Sigmoid colon (tissue), 7 donors: ENCODE measurements at regions of chr19 and their contacts with region 1.

Region 1: GRCh38 chr19:15125232-15126067 is 18.2 kb downstream of the SYDE1 start:
- DNase-seq: peak; percentile 100
- H3K4me3 ChIP-seq: peak overlapping the region; percentile 74 to 89 (median 78)
- H3K27ac ChIP-seq: peak overlapping the region; percentile 92 to 98 (median 96)
- H3K4me1 ChIP-seq: peaks cover 0 to 31% (median 27%) of the 10 kb centered on the region in 4 donors
- H3K27me3 ChIP-seq: no peaks in the 10 kb centered on the region
- CTCF ChIP-seq: peak in 1 of 4 experiments; percentile 18
- EP300 ChIP-seq: peak in 1 of 4 donors; percentile 72
- POLR2A ChIP-seq: peak in 1 of 2 donors; percentile 46

Region 2: DNA sequence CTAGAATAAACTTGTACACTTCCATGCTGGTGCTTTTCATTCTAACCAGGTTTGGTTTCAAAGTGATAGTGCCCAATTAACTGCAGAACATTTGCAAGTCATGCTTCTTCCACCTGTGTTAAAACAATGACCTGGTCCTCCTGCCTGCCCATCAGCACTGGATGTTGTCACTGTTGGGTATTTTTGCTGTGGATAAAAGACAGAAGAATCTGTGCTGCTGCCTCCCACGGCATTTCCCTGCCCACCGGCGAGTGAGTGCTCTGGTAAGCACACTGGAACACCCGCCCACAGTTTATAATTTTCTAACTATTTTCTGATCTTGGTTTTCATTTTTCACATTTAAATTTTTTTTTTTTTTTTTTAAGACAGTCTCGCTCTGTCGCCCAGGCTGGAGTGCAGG is 256.4 kb after region 1 on chr19:
- intact Hi-C with region 1: no loop called
- DNase-seq: no peak
- H3K4me3 ChIP-seq: no peak overlapping the region
- H3K27ac ChIP-seq: no peak overlapping the region
- H3K4me1 ChIP-seq: peaks cover 0 to 26% (median 23%) of the 10 kb centered on the region in 4 donors
- H3K27me3 ChIP-seq: no peaks in the 10 kb centered on the region
- CTCF ChIP-seq: no peak
- EP300 ChIP-seq: no peak
- POLR2A ChIP-seq: no peak

Region 3: GRCh38 chr19:16076154-16076957 is 950.9 kb after region 1 on chr19 and contains the start of gene TPM4:
- intact Hi-C with region 1: loop called (anchors 10 kb)
- DNase-seq: peak; percentile 99
- H3K4me3 ChIP-seq: peak within 1 kb of the TSS; percentile 90 to 99 (median 94)
- H3K27ac ChIP-seq: peak within 1 kb of the TSS; percentile 97 to 100 (median 100)
- H3K4me1 ChIP-seq: peaks cover 0 to 80% (median 78%) of the 10 kb centered on the region in 4 donors
- H3K27me3 ChIP-seq: no peaks in the 10 kb centered on the region
- CTCF ChIP-seq: no peak
- EP300 ChIP-seq: peak; percentile 62 to 96 (median 96)
- POLR2A ChIP-seq: peak in 1 of 2 donors; percentile 35
- total RNA-seq, gene TPM4: 222 to 826 (median 353) TPM